ENCODE measurements at regions of chr11 and their contacts with region 1.

Region 1: DNA sequence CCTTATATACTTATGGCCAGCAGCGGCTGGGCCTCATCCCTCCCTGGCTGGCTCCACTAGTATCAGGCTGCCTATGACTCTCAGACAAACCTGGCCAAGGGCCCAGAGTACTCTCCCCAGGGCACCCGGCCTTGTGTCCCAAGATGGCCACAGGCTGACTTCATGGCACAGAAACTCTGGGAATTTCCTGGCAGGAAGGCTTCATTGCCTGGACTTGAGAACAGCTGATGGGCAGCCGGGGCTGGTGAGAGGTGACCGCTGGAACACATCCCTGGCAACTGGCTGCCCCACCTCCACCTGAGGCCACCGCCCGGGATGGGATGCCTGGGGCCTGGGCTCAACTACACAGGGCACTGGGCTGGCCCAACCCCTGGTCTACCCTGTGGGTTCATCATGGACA is 3.3 kb downstream of the FADS3 start:
- DNase-seq: no peak
- H3K4me3 ChIP-seq: no peak overlapping the region
- H3K27ac ChIP-seq: peak overlapping the region; percentile 35 to 89 (median 64)
- H3K4me1 ChIP-seq: peaks cover 17 to 50% (median 21%) of the 10 kb centered on the region in 3 donors
- H3K27me3 ChIP-seq: peaks cover 0 to 2% (median 0%) of the 10 kb centered on the region in 4 donors
- CTCF ChIP-seq: no peak
- POLR2A ChIP-seq: no peak

Region 2: DNA sequence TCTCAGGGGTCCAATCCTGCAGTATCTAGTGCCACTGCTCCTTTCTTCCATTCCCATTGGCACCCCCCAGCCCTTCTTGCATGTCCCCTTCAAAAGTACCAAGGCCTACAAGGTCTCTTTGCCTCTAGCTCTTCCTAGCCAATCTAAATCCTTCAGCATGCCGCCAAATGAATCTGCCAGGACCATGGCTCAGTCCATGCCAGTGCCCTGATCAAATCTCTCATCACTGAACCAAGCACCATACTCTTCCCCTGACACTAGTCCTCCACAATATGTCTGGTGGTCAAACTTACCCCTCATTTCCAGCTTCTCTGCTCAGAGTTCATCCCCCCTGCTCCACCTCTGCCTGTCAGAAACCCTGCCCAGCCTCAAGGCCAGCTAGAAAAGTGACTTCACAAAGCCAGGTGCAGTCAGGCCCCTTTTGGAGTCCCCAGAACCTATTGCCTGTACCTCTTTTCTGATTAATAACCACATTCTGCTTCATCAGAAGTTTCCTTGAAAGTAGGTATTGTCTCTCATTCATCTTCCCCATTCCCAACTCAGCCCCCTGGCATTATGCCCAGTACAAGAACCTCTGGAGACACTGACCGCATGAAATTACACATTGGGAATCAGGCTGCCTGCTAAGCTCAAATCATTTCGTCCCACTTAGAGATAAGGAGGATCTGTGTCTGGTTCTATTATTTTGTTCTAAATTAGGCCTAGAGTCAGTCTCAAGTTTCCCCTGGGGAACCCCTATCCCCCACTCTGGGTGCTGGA is 84.0 kb before region 1 on chr11:
- intact Hi-C with region 1: loop called (anchors 5 kb)
- DNase-seq: no peak
- H3K4me3 ChIP-seq: no peak overlapping the region
- H3K27ac ChIP-seq: no peak overlapping the region
- H3K4me1 ChIP-seq: no peaks in the 10 kb centered on the region
- H3K27me3 ChIP-seq: no peaks in the 10 kb centered on the region
- CTCF ChIP-seq: no peak
- POLR2A ChIP-seq: no peak